HEK293 (cell line): ENCODE measurements at regions of chr17 and their contacts with region 1.

Region 1: GRCh38 chr17:2828397-2829038 is 32.3 kb downstream of the RAP1GAP2 start:
- H3K4me3 ChIP-seq: no peak overlapping the region
- H3K27ac ChIP-seq: no peak overlapping the region
- H3K4me1 ChIP-seq: no peaks in the 10 kb centered on the region
- CTCF ChIP-seq: peak; percentile 94

Region 2: GRCh38 chr17:2786176-2786881 is 42.2 kb before region 1 on chr17:
- CTCF ChIA-PET with region 1: interaction called, 12 read pairs
- POLR2A ChIA-PET with region 1: no interaction called
- H3K4me3 ChIP-seq: no peak overlapping the region
- H3K27ac ChIP-seq: no peak overlapping the region
- H3K4me1 ChIP-seq: no peaks in the 10 kb centered on the region
- CTCF ChIP-seq: peak; percentile 96

Region 3: GRCh38 chr17:2792366-2793169 is 36.0 kb before region 1 on chr17:
- CTCF ChIA-PET with region 1: interaction called, 12 read pairs
- POLR2A ChIA-PET with region 1: no interaction called
- H3K4me3 ChIP-seq: no peak overlapping the region
- H3K27ac ChIP-seq: no peak overlapping the region
- H3K4me1 ChIP-seq: no peaks in the 10 kb centered on the region
- CTCF ChIP-seq: no peak

Region 4: GRCh38 chr17:2853111-2853721 is 24.7 kb after region 1 on chr17:
- CTCF ChIA-PET with region 1: interaction called, 17 read pairs
- POLR2A ChIA-PET with region 1: no interaction called
- H3K4me3 ChIP-seq: peak overlapping the region; percentile 46
- H3K27ac ChIP-seq: peak overlapping the region; percentile 53; the same call in 1 of the 2 replicates
- H3K4me1 ChIP-seq: no peaks in the 10 kb centered on the region
- CTCF ChIP-seq: no peak

Region 5: GRCh38 chr17:2929881-2930533 is 101.5 kb after region 1 on chr17:
- CTCF ChIA-PET with region 1: interaction called, 22 read pairs
- POLR2A ChIA-PET with region 1: no interaction called
- H3K4me3 ChIP-seq: no peak overlapping the region
- H3K27ac ChIP-seq: no peak overlapping the region
- H3K4me1 ChIP-seq: no peaks in the 10 kb centered on the region
- CTCF ChIP-seq: no peak

Region 6: GRCh38 chr17:3004133-3004801 is 175.7 kb after region 1 on chr17:
- CTCF ChIA-PET with region 1: interaction called, 21 read pairs
- POLR2A ChIA-PET with region 1: no interaction called
- H3K4me3 ChIP-seq: peak overlapping the region; percentile 10
- H3K27ac ChIP-seq: peak overlapping the region; percentile 83
- H3K4me1 ChIP-seq: peaks cover 11% of the 10 kb centered on the region
- CTCF ChIP-seq: no peak

Region 7: DNA sequence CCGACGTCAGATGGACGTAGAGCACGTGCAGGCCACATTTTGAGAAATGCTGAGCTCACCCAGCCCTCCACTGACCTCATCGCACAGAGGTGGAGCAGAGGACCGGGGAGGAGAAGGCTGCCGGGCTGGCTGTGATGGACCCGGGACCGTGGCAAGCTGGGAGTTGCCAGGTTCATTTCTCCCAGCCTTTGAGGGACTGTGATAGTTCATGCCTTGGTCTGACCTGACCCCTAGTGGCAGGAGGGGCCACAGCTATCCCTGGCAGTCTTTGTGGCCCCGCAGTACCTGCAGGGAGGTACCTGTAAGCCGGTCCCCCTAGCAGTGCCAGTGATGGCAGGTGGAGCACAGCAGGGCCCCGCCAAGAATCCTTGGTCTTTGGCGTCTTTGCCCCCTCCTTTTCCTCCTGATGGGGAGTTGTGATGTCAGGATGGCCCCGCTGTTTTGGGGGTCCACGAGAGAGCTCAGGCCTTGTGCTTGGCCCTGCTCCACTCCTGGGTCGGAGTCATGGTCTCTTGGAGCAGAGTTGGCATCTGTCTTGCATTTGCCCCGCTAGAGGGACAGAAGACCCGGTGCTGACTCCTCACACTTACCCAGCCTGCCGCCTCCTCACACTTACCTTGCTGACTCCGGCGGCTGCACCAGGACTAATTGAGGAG is 184.5 kb after region 1 on chr17:
- CTCF ChIA-PET with region 1: interaction called, 38 read pairs
- POLR2A ChIA-PET with region 1: no interaction called
- H3K4me3 ChIP-seq: no peak overlapping the region
- H3K27ac ChIP-seq: no peak overlapping the region
- H3K4me1 ChIP-seq: no peaks in the 10 kb centered on the region
- CTCF ChIP-seq: peak; percentile 84